Right ventricle myocardium inferior (tissue), 1 donor: ENCODE measurements at regions of chr22 and their contacts with region 1.

Region 1: DNA sequence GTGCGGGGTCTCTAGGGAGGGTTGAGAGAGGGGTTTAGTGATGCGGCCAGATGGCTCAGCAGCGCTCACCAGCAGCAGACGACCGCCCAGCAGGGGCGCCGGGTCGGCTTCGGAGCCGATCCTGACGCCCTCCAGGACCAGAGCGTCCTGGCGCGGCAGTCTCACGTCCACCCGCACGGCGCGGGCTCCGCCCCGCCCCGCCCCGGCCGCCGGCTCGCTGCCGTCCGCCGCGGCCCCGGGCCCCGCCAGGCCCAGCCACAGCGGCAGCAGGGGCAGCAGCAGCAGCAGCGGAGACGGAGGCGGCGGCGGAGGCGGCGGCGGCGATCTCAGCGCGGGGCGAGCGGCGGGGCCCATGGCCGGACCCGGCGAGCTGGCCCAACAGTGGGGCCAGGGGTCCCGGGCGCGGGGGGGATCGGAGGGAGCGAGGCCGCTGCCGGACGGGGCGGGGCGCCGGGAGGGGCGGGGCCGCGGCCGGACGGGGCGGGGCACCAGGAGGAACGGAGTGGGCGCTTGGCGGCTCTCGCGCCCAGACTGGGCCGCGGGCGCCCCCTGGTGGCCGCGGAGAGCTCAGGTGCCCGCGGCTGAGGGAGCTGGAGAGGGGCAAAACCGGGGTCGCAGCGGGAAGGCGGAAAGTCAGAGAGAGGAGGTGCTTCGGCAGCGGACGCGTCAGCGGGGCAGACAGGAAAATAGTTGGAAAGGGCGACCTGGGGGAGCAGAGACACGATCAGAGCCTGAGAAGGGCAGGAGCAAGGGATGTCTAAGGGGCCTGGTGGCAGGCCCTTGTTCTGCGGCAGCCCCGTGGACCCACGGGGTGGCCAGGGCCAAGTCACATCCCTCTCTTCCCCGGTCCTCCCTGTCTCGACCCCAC is at the start of gene RNF215:
- DNase-seq: peak; percentile 92
- ATAC-seq: peak; percentile 95
- total RNA-seq, gene RNF215: 3.7 TPM

Region 2: DNA sequence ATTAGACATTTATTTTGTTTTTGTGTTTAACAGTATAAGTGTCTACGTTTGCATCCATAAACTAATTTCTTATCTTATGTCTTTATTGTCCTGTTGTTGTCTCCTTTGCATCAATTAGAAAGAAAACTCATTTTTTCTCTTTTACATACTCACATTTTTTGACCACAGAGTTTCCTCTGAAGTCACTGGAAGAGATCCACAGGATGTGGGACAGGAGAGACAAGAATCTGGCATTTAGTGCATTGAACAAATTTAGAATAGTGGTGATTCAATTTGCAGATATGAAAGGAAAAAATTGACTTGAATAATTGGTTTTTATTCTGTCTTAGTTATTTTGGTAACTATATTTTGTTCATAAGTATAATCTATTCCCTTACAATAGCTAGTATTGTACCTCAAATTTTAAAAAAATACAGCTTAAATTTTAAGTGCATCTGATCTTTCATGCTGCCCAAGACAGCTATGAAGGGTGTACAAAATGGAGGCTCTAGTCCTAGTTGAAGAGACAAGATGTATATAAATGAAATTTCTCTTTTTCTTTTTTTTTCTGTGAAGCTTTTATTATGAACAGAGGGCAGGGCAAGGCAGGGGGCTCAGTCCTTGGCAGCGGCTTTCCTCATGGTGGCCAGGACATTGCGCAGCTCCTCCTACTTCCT is 282.6 kb before region 1 on chr22:
- intact Hi-C with region 1: loop called (anchors 2 kb)
- DNase-seq: no peak
- ATAC-seq: no peak

Region 3: GRCh38 chr22:30262917-30263741 is 124.1 kb before region 1 on chr22:
- intact Hi-C with region 1: loop called (anchors 1 kb)
- DNase-seq: peak; percentile 89
- ATAC-seq: no peak

Region 4: GRCh38 chr22:30289134-30289979 is 97.8 kb before region 1 on chr22 and contains the start of gene CASTOR1:
- intact Hi-C with region 1: loop called (anchors 1 kb)
- DNase-seq: peak; percentile 99
- ATAC-seq: peak; percentile 89
- total RNA-seq, gene CASTOR1: 8.2 TPM

Region 5: DNA sequence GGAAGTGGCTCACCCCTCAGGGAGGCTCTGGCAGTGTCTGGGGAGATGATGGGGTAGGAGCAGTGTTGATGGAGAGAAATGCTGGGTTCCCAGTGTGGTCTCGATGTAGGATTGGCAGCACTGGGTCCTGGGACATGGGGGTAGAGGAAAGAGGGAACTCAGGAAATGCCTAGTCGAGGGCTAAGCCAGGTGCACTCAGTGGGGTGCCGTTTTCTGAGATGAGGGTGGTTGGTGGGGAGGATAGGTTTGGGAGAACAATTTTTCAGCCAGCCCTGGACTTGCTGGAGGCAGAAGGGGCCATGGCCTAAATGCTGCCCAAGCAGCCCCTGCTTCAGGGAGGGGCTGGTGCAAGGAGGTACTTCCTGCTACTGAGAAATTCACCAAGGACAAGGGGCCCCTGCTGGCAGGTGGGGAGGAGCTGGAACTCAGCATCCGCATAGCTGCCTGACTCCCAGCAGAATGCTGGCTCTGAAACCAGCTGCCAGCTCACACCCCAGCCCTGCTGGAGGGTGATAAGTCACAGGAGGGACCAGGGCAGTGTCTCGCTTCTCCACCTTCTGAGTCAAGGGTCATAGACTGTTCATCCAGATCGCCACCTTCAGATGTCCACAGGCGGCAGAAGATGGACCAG is 24.4 kb before region 1 on chr22:
- intact Hi-C with region 1: no loop called
- DNase-seq: no peak
- ATAC-seq: no peak

Region 6: GRCh38 chr22:30754971-30755756 is 368.0 kb after region 1 on chr22:
- intact Hi-C with region 1: loop called (anchors 10 kb)
- DNase-seq: no peak
- ATAC-seq: peak; percentile 45